CD4-positive, alpha-beta T cell (primary cell): ENCODE measurements at regions of chr16 and their contacts with region 1.

Region 1: GRCh38 chr16:87860553-87861299 is 8.6 kb downstream of the SLC7A5 start:
- DNase-seq: peak in 1 of 14 experiments; percentile 32
- ATAC-seq: peak; percentile 14
- H3K4me3 ChIP-seq: no peak overlapping the region
- H3K4me3 Mint-ChIP-seq: peak overlapping the region; percentile 56
- H3K27ac ChIP-seq: no peak overlapping the region
- H3K27ac Mint-ChIP-seq: peak overlapping the region; percentile 71
- H3K4me1 ChIP-seq: peaks cover 50% of the 10 kb centered on the region
- H3K4me1 Mint-ChIP-seq: peaks cover 22% of the 10 kb centered on the region
- H3K27me3 ChIP-seq: no peaks in the 10 kb centered on the region
- H3K27me3 Mint-ChIP-seq: no peaks in the 10 kb centered on the region
- CTCF ChIP-seq: no peak

Region 2: DNA sequence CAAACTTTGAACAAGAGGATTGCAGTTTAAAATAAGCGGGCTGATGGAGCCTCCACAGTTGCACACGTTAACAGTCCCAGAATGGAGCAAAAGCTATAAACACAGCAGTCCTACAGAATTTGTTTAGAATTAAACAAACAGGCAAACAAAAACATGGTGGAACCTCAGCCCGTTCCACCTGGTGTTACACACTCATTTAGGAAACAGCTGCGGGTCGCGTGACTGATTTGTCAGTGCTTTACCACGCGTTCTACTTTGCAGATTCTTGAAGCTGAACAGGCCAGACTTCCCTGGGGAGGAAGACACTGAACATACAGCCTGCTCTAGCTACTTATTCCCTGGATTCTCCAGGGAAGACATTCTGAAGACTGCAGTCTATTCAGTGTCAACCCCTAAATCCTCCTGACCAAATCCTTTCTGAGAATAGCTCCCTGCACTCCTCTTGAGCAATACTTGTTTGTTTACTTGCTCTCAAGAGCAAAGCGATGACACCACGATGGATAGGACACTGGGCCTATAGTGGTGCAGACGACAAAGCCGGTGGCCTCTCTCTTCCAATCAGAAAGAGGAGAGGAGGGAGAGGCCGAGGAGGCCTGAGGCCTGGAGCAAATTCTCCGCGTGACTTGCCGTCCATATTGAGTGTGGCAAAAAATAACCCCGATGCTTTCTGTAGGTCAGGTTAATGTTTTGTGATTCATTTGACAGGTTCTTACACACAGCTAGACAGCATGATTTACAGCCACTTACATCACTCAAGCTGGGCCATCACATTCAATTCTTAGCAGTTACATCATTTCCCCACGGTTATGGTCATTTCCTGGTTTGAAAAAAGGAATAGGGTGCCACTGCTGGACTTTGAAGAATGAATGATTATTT is 472.5 kb before region 1 on chr16:
- CTCF ChIA-PET with region 1: no interaction called
- POLR2A ChIA-PET with region 1: no interaction called
- intact Hi-C with region 1: loop called in 1 of 2 experiments (anchors 10 kb)
- DNase-seq: peak; percentile 74 to 97 (median 82)
- ATAC-seq: peak; percentile 71
- H3K4me3 ChIP-seq: peak overlapping the region; percentile 8
- H3K4me3 Mint-ChIP-seq: peak overlapping the region; percentile 79
- H3K27ac ChIP-seq: peak overlapping the region; percentile 70 to 82
- H3K27ac Mint-ChIP-seq: peak overlapping the region; percentile 98
- H3K4me1 ChIP-seq: peaks cover 49% of the 10 kb centered on the region
- H3K4me1 Mint-ChIP-seq: peaks cover 49% of the 10 kb centered on the region
- H3K27me3 ChIP-seq: no peaks in the 10 kb centered on the region
- H3K27me3 Mint-ChIP-seq: peaks cover 4% of the 10 kb centered on the region
- CTCF ChIP-seq: no peak

Region 3: GRCh38 chr16:87918866-87919680 is 58.3 kb after region 1 on chr16:
- CTCF ChIA-PET with region 1: no interaction called
- POLR2A ChIA-PET with region 1: no interaction called
- intact Hi-C with region 1: no loop called
- DNase-seq: no peak
- ATAC-seq: no peak
- H3K4me3 ChIP-seq: no peak overlapping the region
- H3K4me3 Mint-ChIP-seq: no peak overlapping the region
- H3K27ac ChIP-seq: no peak overlapping the region
- H3K27ac Mint-ChIP-seq: no peak overlapping the region
- H3K4me1 ChIP-seq: no peaks in the 10 kb centered on the region
- H3K4me1 Mint-ChIP-seq: no peaks in the 10 kb centered on the region
- H3K27me3 ChIP-seq: no peaks in the 10 kb centered on the region
- H3K27me3 Mint-ChIP-seq: no peaks in the 10 kb centered on the region
- CTCF ChIP-seq: no peak